ENCODE measurements at regions of chr1 and their contacts with region 1.

Region 1: GRCh38 chr1:204286831-204287421 is 72.8 kb downstream of the PLEKHA6 start:
- DNase-seq: peak; percentile 51
- H3K4me3 ChIP-seq: peak overlapping the region in 1 of 2 experiments; percentile 54; a peak in 2 of 4 replicates
- H3K27ac ChIP-seq: peak overlapping the region in 1 of 2 experiments; percentile 98; a peak in 2 of 4 replicates
- H3K4me1 ChIP-seq: peaks cover 0 to 54% of the 10 kb centered on the region in 2 experiments; a peak in 2 of 4 replicates
- H3K27me3 ChIP-seq: peaks cover 21% of the 10 kb centered on the region
- CTCF ChIP-seq: no peak
- EP300 ChIP-seq: peak in 1 of 2 experiments; percentile 56; a peak in 1 of 4 replicates
- RAD21 ChIP-seq: no peak

Region 2: GRCh38 chr1:204257954-204258752 is 28.8 kb before region 1 on chr1:
- CTCF ChIA-PET with region 1: interaction called, 180 read pairs
- POLR2A ChIA-PET with region 1: interaction called, 4 read pairs
- DNase-seq: peak; percentile 88
- H3K4me3 ChIP-seq: no peak overlapping the region
- H3K27ac ChIP-seq: peak overlapping the region in 1 of 2 experiments; percentile 67; a peak in 2 of 4 replicates
- H3K4me1 ChIP-seq: peaks cover 0 to 28% of the 10 kb centered on the region in 2 experiments; a peak in 2 of 4 replicates
- H3K27me3 ChIP-seq: no peaks in the 10 kb centered on the region; the same call in 1 of the 2 replicates
- CTCF ChIP-seq: peak; percentile 73
- EP300 ChIP-seq: no peak
- RAD21 ChIP-seq: peak; percentile 80

Region 3: GRCh38 chr1:204301186-204301936 is 14.4 kb after region 1 on chr1:
- CTCF ChIA-PET with region 1: interaction called, 4 read pairs
- POLR2A ChIA-PET with region 1: interaction called, 21 read pairs
- DNase-seq: no peak
- H3K4me3 ChIP-seq: no peak overlapping the region
- H3K27ac ChIP-seq: peak overlapping the region in 1 of 2 experiments; percentile 100; a peak in 2 of 4 replicates
- H3K4me1 ChIP-seq: peaks cover 0 to 56% of the 10 kb centered on the region in 2 experiments; a peak in 2 of 4 replicates
- H3K27me3 ChIP-seq: peaks cover 20% of the 10 kb centered on the region
- CTCF ChIP-seq: no peak
- EP300 ChIP-seq: no peak
- RAD21 ChIP-seq: no peak

Region 4: DNA sequence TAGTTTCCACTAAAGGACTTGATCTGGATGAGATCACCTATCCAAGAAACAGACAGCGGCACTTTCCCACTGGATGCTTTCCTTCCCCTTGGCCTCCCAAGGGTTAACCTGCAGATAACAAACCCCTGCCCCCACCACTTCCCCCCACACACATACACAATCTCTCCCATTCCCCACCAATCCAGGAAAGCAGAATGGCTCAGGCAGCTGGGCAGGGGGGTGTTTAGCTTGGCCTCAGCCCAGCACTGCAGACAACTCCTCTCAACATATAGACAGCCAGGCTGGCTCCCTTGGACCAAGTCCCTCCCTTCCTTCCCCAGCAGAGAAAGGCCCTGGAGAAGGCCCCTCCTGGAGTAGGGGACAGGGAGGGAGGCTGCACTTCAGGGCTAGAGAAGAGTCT is 48.2 kb after region 1 on chr1:
- CTCF ChIA-PET with region 1: interaction called, 4 read pairs
- POLR2A ChIA-PET with region 1: interaction called, 24 read pairs
- DNase-seq: peak; percentile 76
- H3K4me3 ChIP-seq: no peak overlapping the region
- H3K27ac ChIP-seq: peak overlapping the region; percentile 32 to 99; a peak in 3 of 4 replicates
- H3K4me1 ChIP-seq: peaks cover 0 to 81% of the 10 kb centered on the region in 2 experiments; a peak in 2 of 4 replicates
- H3K27me3 ChIP-seq: no peaks in the 10 kb centered on the region; the same call in 1 of the 2 replicates
- CTCF ChIP-seq: no peak
- EP300 ChIP-seq: peak in 1 of 2 experiments; percentile 58; a peak in 2 of 4 replicates
- RAD21 ChIP-seq: peak; percentile 33

Region 5: DNA sequence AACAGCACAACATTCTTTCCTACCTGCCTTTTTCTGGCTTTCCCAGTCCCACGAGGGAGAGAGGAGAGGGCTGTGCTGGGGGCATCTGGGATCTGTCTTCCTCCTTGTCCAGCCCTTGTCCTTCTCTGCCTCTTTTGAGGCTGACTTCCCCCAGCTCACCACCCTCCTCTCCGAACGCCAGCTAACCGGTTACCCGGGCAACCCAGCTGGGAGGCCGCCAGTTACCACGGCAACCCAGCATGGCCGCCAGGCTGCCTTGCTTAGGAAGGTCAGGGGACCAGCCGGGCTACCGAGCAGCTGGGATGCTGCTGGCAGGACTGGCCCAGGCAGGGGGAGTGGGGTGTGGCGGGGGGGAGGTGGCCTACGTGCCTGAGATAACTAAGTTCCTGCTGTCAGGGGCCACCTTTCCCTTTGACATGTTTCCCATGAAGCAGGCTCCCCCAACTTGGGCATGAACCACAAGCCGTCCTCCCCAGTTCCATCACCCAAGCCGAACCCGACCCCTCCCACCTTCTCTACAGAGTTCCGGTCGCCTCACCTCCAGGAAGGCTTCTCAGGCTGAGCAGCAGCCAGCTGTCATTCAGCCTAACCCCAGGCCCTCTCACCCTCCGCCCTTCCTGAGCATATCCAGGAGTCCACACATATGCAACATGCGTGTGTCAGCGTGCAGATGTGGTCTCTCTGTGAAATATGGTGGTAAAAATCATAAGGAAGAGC is 64.1 kb after region 1 on chr1:
- CTCF ChIA-PET with region 1: interaction called, 15 read pairs
- POLR2A ChIA-PET with region 1: interaction called, 12 read pairs
- DNase-seq: peak; percentile 90
- H3K4me3 ChIP-seq: peak overlapping the region in 1 of 2 experiments; percentile 40; a peak in 2 of 4 replicates
- H3K27ac ChIP-seq: peak overlapping the region in 1 of 2 experiments; percentile 87; a peak in 3 of 4 replicates
- H3K4me1 ChIP-seq: peaks cover 9 to 51% of the 10 kb centered on the region in 2 experiments; a peak in 2 of 4 replicates
- H3K27me3 ChIP-seq: no peaks in the 10 kb centered on the region
- CTCF ChIP-seq: no peak
- EP300 ChIP-seq: no peak
- RAD21 ChIP-seq: no peak

Region 6: DNA sequence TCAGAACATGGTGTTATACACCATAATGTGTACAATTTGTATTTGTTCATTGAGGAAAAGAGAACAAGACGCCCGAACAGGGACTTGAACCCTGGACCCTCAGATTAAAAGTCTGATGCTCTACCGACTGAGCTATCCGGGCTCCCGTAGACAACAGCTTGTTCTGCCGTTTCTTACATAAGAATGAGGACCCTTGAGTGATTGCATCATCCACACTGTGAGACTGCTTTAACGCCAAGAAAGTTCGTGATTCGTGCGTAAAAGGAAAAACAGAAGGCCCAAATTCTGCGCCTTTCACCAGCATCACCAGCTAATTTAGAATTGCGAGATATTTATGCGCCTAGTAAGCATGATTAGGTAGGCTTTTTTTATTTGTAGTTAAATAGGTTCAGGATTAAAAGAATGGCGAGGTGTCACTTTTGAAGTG is 220.0 kb after region 1 on chr1:
- CTCF ChIA-PET with region 1: no interaction called
- POLR2A ChIA-PET with region 1: no interaction called
- DNase-seq: peak; percentile 43
- H3K4me3 ChIP-seq: peak overlapping the region; percentile 44 to 72
- H3K27ac ChIP-seq: peak overlapping the region; percentile 92 to 95
- H3K4me1 ChIP-seq: peaks cover 3 to 5% of the 10 kb centered on the region in 2 experiments; a peak in 2 of 4 replicates
- H3K27me3 ChIP-seq: no peaks in the 10 kb centered on the region
- CTCF ChIP-seq: no peak
- EP300 ChIP-seq: peak in 1 of 2 experiments; percentile 62; a peak in 1 of 4 replicates
- RAD21 ChIP-seq: no peak

Measured in SK-N-SH (cell line).